Activated naive CD4-positive, alpha-beta T cell treated with anti-CD3 and anti-CD28 coated beads for 36 hours (primary cell): ENCODE measurements at regions of chr17 and their contacts with region 1.

Region 1: GRCh38 chr17:28812091-28812747 is 30.4 kb downstream of the FAM222B start:
- DNase-seq: peak; percentile 98
- H3K4me3 Mint-ChIP-seq: peak overlapping the region; percentile 82
- H3K27ac Mint-ChIP-seq: peak overlapping the region; percentile 86
- H3K4me1 Mint-ChIP-seq: peaks cover 50% of the 10 kb centered on the region
- H3K27me3 Mint-ChIP-seq: no peaks in the 10 kb centered on the region

Region 2: GRCh38 chr17:28644985-28645939 is 167.0 kb before region 1 on chr17 and contains the start of gene BLTP2:
- CTCF ChIA-PET with region 1: no interaction called
- intact Hi-C with region 1: no loop called
- DNase-seq: peak; percentile 96
- H3K4me3 Mint-ChIP-seq: peak within 1 kb of the TSS; percentile 84
- H3K27ac Mint-ChIP-seq: peak within 1 kb of the TSS; percentile 86
- H3K4me1 Mint-ChIP-seq: peaks cover 36% of the 10 kb centered on the region
- H3K27me3 Mint-ChIP-seq: no peaks in the 10 kb centered on the region
- total RNA-seq, gene BLTP2: 89.4 to 92.0 TPM

Region 3: DNA sequence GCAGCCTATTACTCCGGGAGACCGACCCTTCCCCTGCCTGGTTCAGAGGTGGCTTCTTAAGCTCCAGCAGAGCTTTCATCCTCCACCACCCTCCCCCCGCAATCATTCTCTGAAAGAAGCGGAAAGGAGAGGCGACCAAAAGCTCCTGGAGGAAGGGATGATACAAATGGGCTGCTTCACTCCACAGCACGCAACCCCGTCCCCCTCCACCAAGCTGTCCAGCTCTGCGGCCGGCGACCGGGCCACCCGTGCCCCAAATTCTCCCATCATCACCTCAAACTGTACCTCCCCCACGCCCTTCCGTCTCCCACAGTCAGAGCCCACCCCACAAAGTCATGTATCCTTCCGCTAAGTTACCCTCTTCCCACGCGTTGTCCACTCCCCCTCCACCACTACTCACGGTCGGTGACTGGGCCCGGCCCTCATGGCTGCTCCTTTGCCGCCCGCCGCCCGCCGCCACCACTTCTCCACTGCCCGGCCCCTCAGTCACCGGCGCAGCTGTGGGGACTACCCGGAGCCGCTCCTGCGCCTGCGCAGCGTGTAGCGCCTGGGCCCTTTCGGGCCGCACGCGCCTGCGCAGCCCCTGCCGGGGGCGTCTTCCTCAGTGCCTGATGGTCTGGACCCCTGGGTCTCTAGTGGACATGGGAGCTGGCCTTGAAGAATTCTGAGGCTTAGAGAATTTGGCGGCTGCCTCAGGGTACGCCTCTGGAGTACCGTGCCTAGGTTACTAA is 30.2 kb after region 1 on chr17 and contains the start of gene FAM222B:
- CTCF ChIA-PET with region 1: interaction called, 6 read pairs
- intact Hi-C with region 1: loop called (anchors 1 kb)
- DNase-seq: peak; percentile 88
- H3K4me3 Mint-ChIP-seq: peak within 1 kb of the TSS; percentile 99
- H3K27ac Mint-ChIP-seq: peak within 1 kb of the TSS; percentile 95
- H3K4me1 Mint-ChIP-seq: peaks cover 31% of the 10 kb centered on the region
- H3K27me3 Mint-ChIP-seq: no peaks in the 10 kb centered on the region
- total RNA-seq, gene FAM222B: 11.2 TPM

Region 4: GRCh38 chr17:28878981-28879380 is 66.8 kb after region 1 on chr17:
- CTCF ChIA-PET with region 1: interaction called, 4 read pairs
- intact Hi-C with region 1: loop called (anchors 1 kb)
- DNase-seq: peak; percentile 55
- H3K4me3 Mint-ChIP-seq: no peak overlapping the region
- H3K27ac Mint-ChIP-seq: peak overlapping the region; percentile 8
- H3K4me1 Mint-ChIP-seq: peaks cover 37% of the 10 kb centered on the region
- H3K27me3 Mint-ChIP-seq: no peaks in the 10 kb centered on the region

Region 5: GRCh38 chr17:28902819-28903545 is 90.8 kb after region 1 on chr17 and contains the start of gene DHRS13:
- CTCF ChIA-PET with region 1: interaction called, 5 read pairs
- intact Hi-C with region 1: loop called (anchors 1 kb)
- DNase-seq: peak; percentile 93
- H3K4me3 Mint-ChIP-seq: peak within 1 kb of the TSS; percentile 98
- H3K27ac Mint-ChIP-seq: peak within 1 kb of the TSS; percentile 88
- H3K4me1 Mint-ChIP-seq: peaks cover 35% of the 10 kb centered on the region
- H3K27me3 Mint-ChIP-seq: no peaks in the 10 kb centered on the region
- total RNA-seq, gene DHRS13: 20.1 to 20.9 TPM

Region 6: GRCh38 chr17:29140051-29140621 is 327.9 kb after region 1 on chr17:
- CTCF ChIA-PET with region 1: no interaction called
- intact Hi-C with region 1: loop called (anchors 10 kb)
- DNase-seq: peak; percentile 89
- H3K4me3 Mint-ChIP-seq: peak overlapping the region; percentile 83
- H3K27ac Mint-ChIP-seq: peak overlapping the region; percentile 93
- H3K4me1 Mint-ChIP-seq: peaks cover 66% of the 10 kb centered on the region
- H3K27me3 Mint-ChIP-seq: no peaks in the 10 kb centered on the region